Activated CD4-positive, alpha-beta T cell treated with anti-CD3 and anti-CD28 coated beads, Interleukin-2, amount 10 ng/mL, durations not matched to agents 24 days and 14 days (primary cell): ENCODE measurements at regions of chr5 and their contacts with region 1.

Region 1: GRCh38 chr5:122192497-122193496 is 63.5 kb downstream of the ZNF474 start:
- DNase-seq: peak; percentile 64
- H3K4me3 Mint-ChIP-seq: no peak overlapping the region
- H3K27ac Mint-ChIP-seq: no peak overlapping the region
- H3K4me1 Mint-ChIP-seq: no peaks in the 10 kb centered on the region
- H3K27me3 Mint-ChIP-seq: peaks cover 2% of the 10 kb centered on the region

Region 2: GRCh38 chr5:122415030-122415800 is 222.4 kb after region 1 on chr5:
- intact Hi-C with region 1: loop called (anchors 10 kb)
- DNase-seq: peak; percentile 56
- H3K4me3 Mint-ChIP-seq: no peak overlapping the region
- H3K27ac Mint-ChIP-seq: no peak overlapping the region
- H3K4me1 Mint-ChIP-seq: no peaks in the 10 kb centered on the region
- H3K27me3 Mint-ChIP-seq: peaks cover 2% of the 10 kb centered on the region